ENCODE measurements at regions of chr18 and their contacts with region 1.

Region 1: GRCh38 chr18:12883684-12884405 is at the start of gene PTPN2:
- DNase-seq: peak; percentile 87 to 98 (median 92)
- ATAC-seq: peak; percentile 83 to 87
- H3K4me3 Mint-ChIP-seq: peak within 1 kb of the TSS; percentile 85 to 98 (median 94)
- H3K27ac Mint-ChIP-seq: peak within 1 kb of the TSS; percentile 87 to 98 (median 96)
- H3K4me1 Mint-ChIP-seq: peaks cover 33 to 67% (median 54%) of the 10 kb centered on the region in 4 donors
- H3K27me3 Mint-ChIP-seq: no peaks in the 10 kb centered on the region
- polyA plus RNA-seq, gene PTPN2: 71.4 to 76.1 (median 74.2) TPM

Region 2: DNA sequence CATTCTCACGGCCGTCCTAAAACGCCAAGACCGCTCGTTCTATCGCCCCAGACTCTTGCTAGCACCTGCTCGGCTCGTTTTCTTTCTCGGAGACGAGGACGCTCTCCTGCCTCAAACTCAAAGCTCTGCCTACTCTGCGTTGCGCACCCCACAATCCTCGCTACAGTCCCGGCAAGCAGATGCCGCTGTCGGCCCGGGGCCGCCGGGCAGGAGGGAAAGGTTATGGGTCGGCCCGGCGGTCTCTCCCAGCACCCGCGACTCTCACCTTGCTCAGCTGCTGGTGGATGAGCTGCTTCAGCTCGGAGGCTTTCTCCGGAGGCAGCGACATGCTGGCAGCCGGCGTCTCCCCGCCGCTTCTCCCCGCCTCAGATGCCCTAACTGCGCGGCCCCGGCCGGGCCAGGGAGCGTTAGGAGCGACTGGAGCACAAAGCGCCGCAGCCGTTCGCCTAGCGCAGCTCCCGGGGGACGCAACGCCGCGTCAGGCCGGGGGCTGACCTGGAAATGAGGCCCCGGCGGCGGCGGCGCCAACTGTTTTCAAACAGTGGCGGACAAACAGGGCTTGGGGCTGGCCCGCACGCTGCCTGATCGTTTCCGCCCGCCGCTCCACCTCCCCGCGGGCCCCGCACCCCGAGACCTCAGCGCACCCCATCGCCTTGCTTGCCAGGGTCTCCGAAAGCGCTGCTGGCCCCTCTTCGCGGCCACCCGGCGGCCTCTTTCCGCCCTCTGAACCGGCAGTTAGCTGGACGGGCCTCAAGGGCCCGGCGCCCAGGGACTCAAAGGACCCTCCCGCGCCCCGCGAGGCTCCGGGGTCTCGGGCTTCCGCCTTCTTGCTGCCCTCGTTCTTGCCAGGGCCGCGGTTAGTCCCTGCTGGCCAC is 181.4 kb before region 1 on chr18 and contains the starts of genes CEP76 and PSMG2:
- POLR2A ChIA-PET with region 1: interaction called, 28 read pairs
- DNase-seq: peak; percentile 74 to 96 (median 82)
- ATAC-seq: peak; percentile 80 to 85
- H3K4me3 Mint-ChIP-seq: peak within 1 kb of the TSS; percentile 90 to 99 (median 97)
- H3K27ac Mint-ChIP-seq: peak within 1 kb of the TSS; percentile 96 to 100 (median 99)
- H3K4me1 Mint-ChIP-seq: peaks cover 31 to 57% (median 48%) of the 10 kb centered on the region in 4 donors
- H3K27me3 Mint-ChIP-seq: no peaks in the 10 kb centered on the region
- polyA plus RNA-seq, gene CEP76: 2.9 to 7.3 (median 4.0) TPM
- polyA plus RNA-seq, gene PSMG2: 110 to 117 (median 113) TPM

Region 3: GRCh38 chr18:12843420-12844350 is 40.2 kb before region 1 on chr18:
- POLR2A ChIA-PET with region 1: interaction called, 11 read pairs
- DNase-seq: no peak
- ATAC-seq: no peak
- H3K4me3 Mint-ChIP-seq: peak overlapping the region in 2 of 10 donors; percentile 20 to 44
- H3K27ac Mint-ChIP-seq: peak overlapping the region in 9 of 10 donors; percentile 4 to 85 (median 57)
- H3K4me1 Mint-ChIP-seq: peaks cover 28 to 86% (median 74%) of the 10 kb centered on the region in 4 donors
- H3K27me3 Mint-ChIP-seq: no peaks in the 10 kb centered on the region

Region 4: DNA sequence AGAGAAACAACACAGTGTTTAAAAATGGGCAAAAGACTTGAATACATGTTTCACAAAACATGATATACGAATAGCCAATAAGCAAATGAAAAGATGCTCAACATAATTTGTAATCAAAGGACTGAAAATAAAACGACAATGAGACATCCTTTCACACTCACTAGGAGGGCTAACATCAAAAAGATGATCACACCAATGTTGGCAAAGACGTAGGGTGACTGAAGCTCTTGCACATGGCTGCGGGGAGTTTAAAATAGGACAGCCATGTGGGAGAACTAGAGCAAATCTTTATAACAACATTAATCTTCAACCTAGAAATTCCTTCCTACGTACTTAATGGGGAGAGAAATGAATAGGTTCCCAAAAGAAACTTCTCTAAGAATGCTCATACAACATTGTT is 44.8 kb after region 1 on chr18:
- POLR2A ChIA-PET with region 1: no interaction called
- DNase-seq: no peak
- ATAC-seq: no peak
- H3K4me3 Mint-ChIP-seq: no peak overlapping the region
- H3K27ac Mint-ChIP-seq: no peak overlapping the region
- H3K4me1 Mint-ChIP-seq: peaks cover 0 to 10% (median 1%) of the 10 kb centered on the region in 4 donors
- H3K27me3 Mint-ChIP-seq: no peaks in the 10 kb centered on the region

Region 5: DNA sequence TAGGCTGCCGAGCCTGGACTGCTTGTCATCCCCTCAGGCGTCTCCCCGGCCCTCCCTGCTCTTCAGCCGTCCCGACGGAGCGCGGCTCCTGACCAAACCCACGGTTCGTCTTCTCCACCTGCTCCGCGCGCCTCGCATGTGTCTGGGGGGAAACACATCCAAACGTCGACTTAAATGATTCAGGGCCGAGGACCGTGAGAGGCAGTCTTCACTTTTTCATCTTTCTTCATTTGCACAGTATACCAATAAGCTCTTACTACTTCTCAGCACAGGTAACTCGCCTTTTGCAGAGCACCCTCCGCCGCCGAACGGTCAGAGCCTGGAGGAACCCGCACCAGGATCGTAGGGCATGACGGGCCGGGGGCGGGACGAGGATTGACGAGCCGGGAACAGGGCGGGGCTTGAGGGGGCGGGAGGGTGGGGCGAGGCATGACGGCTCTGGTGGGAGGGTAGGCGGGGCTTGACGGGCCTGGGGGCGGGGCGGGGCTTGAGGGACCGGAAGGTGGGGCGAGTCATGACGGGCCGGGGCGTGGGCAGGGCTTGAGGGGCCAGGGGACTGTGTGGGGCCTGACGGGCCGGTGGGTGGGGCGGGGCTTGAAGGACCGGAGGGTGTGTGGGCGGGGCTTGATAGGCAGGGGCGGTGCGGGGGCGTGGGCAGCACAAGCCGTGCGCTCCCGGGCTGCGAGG is 63.7 kb after region 1 on chr18 and contains the start of gene SEH1L:
- POLR2A ChIA-PET with region 1: interaction called, 23 read pairs
- DNase-seq: peak in 9 of 10 donors; percentile 94 to 100 (median 98)
- ATAC-seq: peak; percentile 78 to 79
- H3K4me3 Mint-ChIP-seq: peak within 1 kb of the TSS; percentile 93 to 99 (median 98)
- H3K27ac Mint-ChIP-seq: peak within 1 kb of the TSS; percentile 91 to 99 (median 98)
- H3K4me1 Mint-ChIP-seq: peaks cover 10 to 53% (median 38%) of the 10 kb centered on the region in 4 donors
- H3K27me3 Mint-ChIP-seq: no peaks in the 10 kb centered on the region
- polyA plus RNA-seq, gene SEH1L: 25.5 to 37.1 (median 35.5) TPM

Region 6: GRCh38 chr18:13137670-13138419 is 254.0 kb after region 1 on chr18:
- POLR2A ChIA-PET with region 1: interaction called, 11 read pairs
- DNase-seq: peak; percentile 28 to 91 (median 75)
- ATAC-seq: peak; percentile 81
- H3K4me3 Mint-ChIP-seq: peak overlapping the region; percentile 92 to 100 (median 98)
- H3K27ac Mint-ChIP-seq: peak overlapping the region; percentile 93 to 100 (median 99)
- H3K4me1 Mint-ChIP-seq: peaks cover 12 to 30% (median 26%) of the 10 kb centered on the region in 4 donors
- H3K27me3 Mint-ChIP-seq: no peaks in the 10 kb centered on the region

Measured in naive thymus-derived CD8-positive, alpha-beta T cell (primary cell).